Ascending aorta (tissue), 2 donors: ENCODE measurements at regions of chr19 and their contacts with region 1.

Region 1: GRCh38 chr19:15995536-15995935 is 46.7 kb downstream of the OR10H4 start:
- DNase-seq: peak in 1 of 2 donors; percentile 66
- H3K4me3 ChIP-seq: no peak overlapping the region
- H3K27ac ChIP-seq: no peak overlapping the region
- H3K4me1 ChIP-seq: peaks cover 0 to under 1% of the 10 kb centered on the region in 2 donors
- H3K27me3 ChIP-seq: no peaks in the 10 kb centered on the region
- CTCF ChIP-seq: no peak

Region 2: DNA sequence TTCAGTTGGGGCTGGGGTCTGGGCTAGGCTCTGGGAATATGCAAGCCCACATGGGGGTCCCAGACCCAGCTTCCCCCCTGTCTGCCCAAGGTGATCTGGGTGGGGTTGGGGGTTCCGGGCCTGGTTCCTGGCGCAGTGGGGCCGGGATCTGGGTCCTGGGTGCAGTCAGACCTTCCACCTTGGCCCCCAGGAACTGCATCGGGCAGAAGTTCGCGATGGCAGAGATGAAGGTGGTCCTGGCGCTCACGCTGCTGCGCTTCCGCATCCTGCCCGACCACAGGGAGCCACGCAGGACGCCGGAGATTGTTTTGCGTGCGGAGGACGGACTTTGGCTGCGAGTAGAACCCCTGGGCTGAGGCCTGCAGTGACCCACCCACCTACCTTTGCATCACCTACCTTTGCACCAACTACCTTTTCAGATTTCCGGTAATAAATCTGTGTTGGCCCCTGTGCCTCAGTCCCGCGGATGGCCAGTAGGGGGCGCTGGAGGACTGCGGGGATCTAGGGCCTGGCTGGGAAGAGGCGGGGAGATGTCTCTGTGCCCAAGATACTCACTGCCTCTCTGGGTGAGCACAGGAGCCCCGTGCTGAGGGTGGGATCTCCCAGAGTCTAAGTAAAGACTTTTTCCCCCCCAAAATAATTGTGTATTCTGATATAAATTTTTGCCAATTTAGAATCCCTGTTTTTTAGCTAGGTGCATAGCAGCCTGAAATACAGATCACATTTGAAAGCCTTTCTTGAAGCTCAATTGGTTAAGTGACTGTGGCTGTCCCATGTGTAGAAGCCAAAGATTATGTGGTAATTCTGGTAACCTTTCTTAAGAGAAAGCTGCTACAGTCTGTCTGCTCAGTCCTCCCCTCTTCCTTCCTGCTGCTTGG is 366.3 kb before region 1 on chr19:
- intact Hi-C with region 1: no loop called
- DNase-seq: peak; percentile 12 to 86
- H3K4me3 ChIP-seq: no peak overlapping the region
- H3K27ac ChIP-seq: no peak overlapping the region
- H3K4me1 ChIP-seq: no peaks in the 10 kb centered on the region
- H3K27me3 ChIP-seq: no peaks in the 10 kb centered on the region
- CTCF ChIP-seq: peak; percentile 85 to 91 (median 87)

Region 3: DNA sequence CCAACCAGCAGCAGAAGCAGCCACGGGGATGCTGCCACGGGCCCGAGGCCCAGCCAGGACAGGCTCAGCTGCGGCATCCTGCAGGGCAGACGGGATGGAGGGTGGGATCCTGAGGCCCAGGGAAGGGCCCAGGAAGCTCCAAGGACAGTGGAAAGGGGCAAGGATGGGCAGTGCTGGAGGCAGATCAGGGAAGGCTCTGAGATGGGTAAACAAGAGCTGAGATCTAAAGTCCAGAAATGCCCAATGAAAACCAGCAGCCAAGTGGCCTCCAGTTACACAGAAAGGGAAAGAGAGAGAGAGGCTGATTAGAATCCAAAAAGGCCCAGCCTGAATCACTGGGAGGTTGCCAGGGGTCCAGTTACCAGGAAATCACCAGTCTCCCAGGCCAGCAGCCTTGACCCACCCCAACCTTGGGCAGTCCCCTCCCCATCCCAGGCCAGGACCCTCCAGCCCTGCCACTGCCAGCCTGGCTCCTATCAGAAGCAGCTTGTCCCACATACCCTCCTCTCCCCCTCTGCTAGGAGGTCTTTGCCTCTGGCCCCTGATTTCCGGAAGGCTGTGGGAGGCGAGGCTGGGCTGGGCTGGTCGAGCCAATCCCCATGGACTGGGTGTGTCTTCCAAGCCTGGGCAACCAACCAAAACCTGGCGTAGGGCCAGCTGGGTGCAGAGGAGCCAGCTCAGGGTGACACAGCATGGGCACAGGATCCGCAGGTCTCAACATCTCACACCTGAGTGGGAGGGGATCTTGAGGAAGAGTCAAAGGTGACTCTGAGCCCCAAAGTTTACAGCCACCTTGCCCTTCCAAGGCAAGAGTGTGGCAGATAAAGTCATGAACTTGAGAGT is 61.0 kb before region 1 on chr19 and contains the start of gene CYP4F11:
- intact Hi-C with region 1: loop called (anchors 5 kb)
- DNase-seq: peak in 1 of 2 donors; percentile 82
- H3K4me3 ChIP-seq: peak within 1 kb of the TSS; percentile 4 to 7
- H3K27ac ChIP-seq: peak within 1 kb of the TSS; percentile 34 to 69
- H3K4me1 ChIP-seq: peaks cover 0 to 5% of the 10 kb centered on the region in 2 donors
- H3K27me3 ChIP-seq: no peaks in the 10 kb centered on the region
- CTCF ChIP-seq: no peak
- total RNA-seq, gene CYP4F11: 0.75 TPM

Region 4: DNA sequence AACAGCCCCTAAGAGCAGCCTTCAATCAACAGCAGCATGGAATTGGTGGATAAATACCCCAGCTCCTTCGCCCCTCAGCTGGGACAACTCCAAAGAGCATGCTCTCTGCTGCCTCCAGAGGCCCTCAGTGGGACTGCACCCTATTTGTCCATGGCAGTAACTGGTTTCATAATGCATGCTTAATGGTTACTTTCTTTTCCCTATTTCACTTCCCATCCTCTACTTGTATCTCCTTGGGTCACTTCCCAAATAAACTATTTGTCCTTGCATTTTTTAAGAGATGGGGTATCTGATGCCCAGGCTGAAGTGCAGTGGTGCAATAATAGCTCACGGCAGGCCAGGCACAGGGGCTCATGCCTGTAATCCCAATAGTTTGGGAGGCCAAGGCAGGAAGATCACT is 67.3 kb after region 1 on chr19:
- intact Hi-C with region 1: no loop called
- DNase-seq: peak in 1 of 2 donors; percentile 65
- H3K4me3 ChIP-seq: no peak overlapping the region
- H3K27ac ChIP-seq: no peak overlapping the region
- H3K4me1 ChIP-seq: peaks cover 0 to 27% of the 10 kb centered on the region in 2 donors
- H3K27me3 ChIP-seq: no peaks in the 10 kb centered on the region
- CTCF ChIP-seq: peak; percentile 41 to 72 (median 67)